ENCODE measurements at regions of chr3 and their contacts with region 1.

Region 1: DNA sequence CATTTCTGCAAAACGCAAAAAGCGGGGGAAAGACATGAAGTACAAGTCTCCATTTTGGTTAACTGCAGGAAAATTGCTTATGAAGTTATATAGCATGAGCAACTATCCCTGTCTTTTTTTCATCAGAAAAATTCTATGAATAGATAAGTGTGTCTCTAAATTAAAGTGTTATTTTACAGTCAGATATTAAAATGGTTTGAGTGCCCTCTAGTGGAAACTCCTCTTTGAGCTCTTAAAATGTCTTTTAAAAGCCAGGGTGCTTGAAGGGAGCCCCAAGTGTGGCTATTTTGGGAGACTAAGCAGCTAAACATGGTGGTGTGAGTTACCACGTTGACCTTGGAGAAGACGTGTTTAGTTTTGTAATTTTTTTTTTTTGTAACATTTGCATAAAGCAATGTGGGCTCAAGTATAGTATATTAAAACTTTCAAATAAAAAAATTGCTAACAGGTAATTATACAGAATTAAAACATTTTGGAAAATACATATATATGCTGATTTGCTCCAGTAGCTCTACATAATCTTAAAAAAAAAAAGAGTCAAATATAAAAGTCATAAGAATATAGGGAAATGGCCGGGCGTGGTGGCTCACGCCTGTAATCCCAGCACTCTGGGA is 77.2 kb downstream of the PPP2R3A start:
- DNase-seq: peak; percentile 67
- H3K4me3 ChIP-seq: no peak overlapping the region
- H3K27ac ChIP-seq: no peak overlapping the region
- H3K4me1 ChIP-seq: no peaks in the 10 kb centered on the region
- H3K27me3 ChIP-seq: no peaks in the 10 kb centered on the region
- CTCF ChIP-seq: peak; percentile 23 to 50
- POLR2A ChIP-seq: no peak

Region 2: GRCh38 chr3:134754768-134755559 is 1287.8 kb before region 1 on chr3:
- CTCF ChIA-PET with region 1: interaction called, 10 read pairs
- POLR2A ChIA-PET with region 1: no interaction called
- dilution Hi-C with region 1: no loop called
- intact Hi-C with region 1: no loop called
- DNase-seq: peak; percentile 24
- H3K4me3 ChIP-seq: no peak overlapping the region
- H3K27ac ChIP-seq: no peak overlapping the region
- H3K4me1 ChIP-seq: no peaks in the 10 kb centered on the region
- H3K27me3 ChIP-seq: no peaks in the 10 kb centered on the region
- CTCF ChIP-seq: peak; percentile 54 to 83
- POLR2A ChIP-seq: no peak

Region 3: DNA sequence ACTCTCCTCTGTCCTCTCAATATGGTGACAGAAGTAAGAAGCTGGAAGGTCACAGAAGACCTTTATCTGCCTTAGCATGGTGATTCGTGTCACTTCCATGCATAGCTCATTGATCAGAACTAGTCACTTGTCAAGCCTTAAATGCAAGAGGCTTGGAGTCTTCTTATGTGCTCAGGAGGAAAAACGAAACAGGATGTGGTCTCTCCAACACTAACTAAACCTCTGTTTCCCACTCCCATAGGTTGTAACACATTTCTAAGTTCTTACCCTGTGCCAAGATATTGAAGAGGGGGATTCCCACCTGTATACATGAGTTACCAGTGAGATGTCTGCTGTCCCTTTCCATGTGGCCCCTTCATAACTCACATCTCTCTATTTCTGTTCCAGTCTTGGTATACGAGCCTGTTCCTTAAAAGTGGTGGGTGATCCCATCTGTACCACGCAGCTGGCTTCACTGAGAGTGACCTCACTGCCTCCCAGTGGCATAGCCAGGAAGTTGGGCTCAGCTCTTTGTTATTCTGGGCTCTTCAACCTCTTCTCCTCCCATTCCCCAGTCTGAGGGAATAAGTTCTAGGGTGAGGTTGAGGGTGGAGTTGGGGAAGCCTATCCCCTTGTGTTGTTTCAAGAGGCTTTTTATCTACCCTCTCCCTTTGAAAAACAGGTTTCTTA is 280.4 kb before region 1 on chr3:
- CTCF ChIA-PET with region 1: no interaction called
- POLR2A ChIA-PET with region 1: no interaction called
- dilution Hi-C with region 1: no loop called
- intact Hi-C with region 1: no loop called
- DNase-seq: no peak
- H3K4me3 ChIP-seq: no peak overlapping the region
- H3K27ac ChIP-seq: no peak overlapping the region
- H3K4me1 ChIP-seq: no peaks in the 10 kb centered on the region
- H3K27me3 ChIP-seq: no peaks in the 10 kb centered on the region
- CTCF ChIP-seq: no peak
- POLR2A ChIP-seq: no peak

Region 4: GRCh38 chr3:135905058-135905724 is 137.5 kb before region 1 on chr3:
- CTCF ChIA-PET with region 1: interaction called, 85 read pairs
- POLR2A ChIA-PET with region 1: no interaction called
- dilution Hi-C with region 1: no loop called
- intact Hi-C with region 1: no loop called
- DNase-seq: no peak
- H3K4me3 ChIP-seq: no peak overlapping the region
- H3K27ac ChIP-seq: no peak overlapping the region
- H3K4me1 ChIP-seq: no peaks in the 10 kb centered on the region
- H3K27me3 ChIP-seq: no peaks in the 10 kb centered on the region
- CTCF ChIP-seq: no peak
- POLR2A ChIP-seq: no peak

Region 5: GRCh38 chr3:135950941-135951340 is 91.8 kb before region 1 on chr3:
- CTCF ChIA-PET with region 1: interaction called, 10 read pairs
- POLR2A ChIA-PET with region 1: no interaction called
- dilution Hi-C with region 1: no loop called
- intact Hi-C with region 1: no loop called
- DNase-seq: no peak
- H3K4me3 ChIP-seq: no peak overlapping the region
- H3K27ac ChIP-seq: no peak overlapping the region
- H3K4me1 ChIP-seq: no peaks in the 10 kb centered on the region
- H3K27me3 ChIP-seq: peaks cover 0 to 2% of the 10 kb centered on the region in 2 experiments
- CTCF ChIP-seq: no peak
- POLR2A ChIP-seq: no peak

Region 6: DNA sequence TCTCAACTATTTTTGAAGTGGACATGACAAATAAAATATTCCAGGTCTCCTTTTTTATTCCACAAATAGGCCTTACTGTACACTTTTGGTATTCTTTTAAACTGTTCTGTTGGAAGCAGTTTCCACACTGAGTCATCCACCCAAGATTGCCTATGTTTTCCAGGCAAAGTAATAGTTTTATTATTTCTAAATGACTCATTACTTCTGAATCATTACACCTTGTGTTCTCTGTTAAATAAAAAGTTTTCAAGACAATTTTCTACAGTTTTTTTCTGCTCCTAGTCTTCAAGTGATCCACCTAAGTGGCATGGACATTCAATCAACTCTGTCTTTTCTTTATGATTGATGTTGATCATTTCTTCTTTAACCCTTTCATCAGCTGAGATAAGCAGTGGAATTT is 50.6 kb before region 1 on chr3:
- CTCF ChIA-PET with region 1: interaction called, 16 read pairs
- POLR2A ChIA-PET with region 1: no interaction called
- dilution Hi-C with region 1: no loop called
- intact Hi-C with region 1: no loop called
- DNase-seq: peak; percentile 90
- H3K4me3 ChIP-seq: peak overlapping the region in 1 of 3 experiments; percentile 8
- H3K27ac ChIP-seq: peak overlapping the region; percentile 98
- H3K4me1 ChIP-seq: peaks cover 24% of the 10 kb centered on the region
- H3K27me3 ChIP-seq: no peaks in the 10 kb centered on the region
- CTCF ChIP-seq: no peak
- POLR2A ChIP-seq: no peak

Region 7: GRCh38 chr3:136134091-136134490 is 91.4 kb after region 1 on chr3:
- CTCF ChIA-PET with region 1: no interaction called
- POLR2A ChIA-PET with region 1: no interaction called
- dilution Hi-C with region 1: no loop called
- intact Hi-C with region 1: no loop called
- DNase-seq: no peak
- H3K4me3 ChIP-seq: no peak overlapping the region
- H3K27ac ChIP-seq: no peak overlapping the region
- H3K4me1 ChIP-seq: no peaks in the 10 kb centered on the region
- H3K27me3 ChIP-seq: no peaks in the 10 kb centered on the region
- CTCF ChIP-seq: no peak
- POLR2A ChIP-seq: no peak